ENCODE measurements at regions of chr7 and their contacts with region 1.

Region 1: DNA sequence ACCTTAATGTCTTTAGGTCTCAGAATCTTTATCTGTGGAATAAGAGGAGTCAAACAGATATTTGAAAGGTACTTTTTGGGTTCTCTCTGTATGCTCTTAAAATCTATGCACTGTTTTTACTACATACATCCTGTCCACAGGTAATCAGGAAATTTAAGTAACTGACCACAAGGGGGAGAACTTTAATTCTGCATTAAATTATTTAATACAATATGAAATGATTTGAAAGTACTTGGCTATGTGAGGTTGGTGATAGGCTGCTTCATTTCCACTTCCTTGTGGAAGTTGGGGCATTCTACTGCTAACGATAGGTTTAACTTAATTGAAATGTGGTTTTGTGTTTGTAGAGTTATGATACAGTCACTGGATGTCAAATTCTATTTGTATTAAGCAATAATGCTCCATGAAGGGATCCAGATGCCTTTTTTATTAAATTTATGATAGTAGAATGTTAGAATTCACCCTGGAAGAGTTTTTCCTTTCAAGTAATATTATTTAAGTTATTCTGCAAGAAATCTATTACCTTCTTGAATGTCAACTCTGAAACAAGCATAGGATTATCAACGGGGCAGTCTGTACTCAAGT is 6.0 kb downstream of the TEX47 start:
- DNase-seq: peak; percentile 37
- H3K4me3 ChIP-seq: no peak overlapping the region
- H3K27ac ChIP-seq: no peak overlapping the region
- H3K4me1 ChIP-seq: no peaks in the 10 kb centered on the region
- H3K27me3 ChIP-seq: peaks cover 2% of the 10 kb centered on the region
- CTCF ChIP-seq: peak; percentile 68

Region 2: DNA sequence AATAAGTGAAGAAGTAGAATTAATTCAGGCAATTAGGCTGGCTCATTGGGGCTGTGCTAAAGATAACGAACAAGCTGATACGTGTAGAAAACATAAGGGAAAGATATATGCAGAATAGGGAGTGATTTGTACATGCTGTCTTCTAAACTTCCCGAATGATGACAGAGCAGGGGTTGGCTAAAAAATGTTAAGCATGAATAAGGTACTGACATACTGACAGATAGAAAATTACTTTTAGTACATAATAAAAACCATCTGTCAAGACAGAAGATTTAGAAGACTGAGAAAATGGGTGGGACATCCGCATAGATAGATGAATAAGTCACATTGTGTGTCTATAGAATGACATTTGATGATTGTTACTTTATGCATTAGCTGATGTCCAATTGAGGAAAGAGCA is 188.9 kb before region 1 on chr7:
- CTCF ChIA-PET with region 1: no interaction called
- POLR2A ChIA-PET with region 1: no interaction called
- intact Hi-C with region 1: no loop called
- DNase-seq: no peak
- H3K4me3 ChIP-seq: no peak overlapping the region
- H3K27ac ChIP-seq: no peak overlapping the region
- H3K4me1 ChIP-seq: no peaks in the 10 kb centered on the region
- H3K27me3 ChIP-seq: peaks cover 10% of the 10 kb centered on the region
- CTCF ChIP-seq: no peak

Region 3: GRCh38 chr7:89622838-89623672 is 833.5 kb after region 1 on chr7:
- CTCF ChIA-PET with region 1: no interaction called
- POLR2A ChIA-PET with region 1: no interaction called
- intact Hi-C with region 1: loop called (anchors 10 kb)
- DNase-seq: peak; percentile 58
- H3K4me3 ChIP-seq: no peak overlapping the region
- H3K27ac ChIP-seq: no peak overlapping the region
- H3K4me1 ChIP-seq: no peaks in the 10 kb centered on the region
- H3K27me3 ChIP-seq: peaks cover 10% of the 10 kb centered on the region
- CTCF ChIP-seq: peak; percentile 81

Region 4: DNA sequence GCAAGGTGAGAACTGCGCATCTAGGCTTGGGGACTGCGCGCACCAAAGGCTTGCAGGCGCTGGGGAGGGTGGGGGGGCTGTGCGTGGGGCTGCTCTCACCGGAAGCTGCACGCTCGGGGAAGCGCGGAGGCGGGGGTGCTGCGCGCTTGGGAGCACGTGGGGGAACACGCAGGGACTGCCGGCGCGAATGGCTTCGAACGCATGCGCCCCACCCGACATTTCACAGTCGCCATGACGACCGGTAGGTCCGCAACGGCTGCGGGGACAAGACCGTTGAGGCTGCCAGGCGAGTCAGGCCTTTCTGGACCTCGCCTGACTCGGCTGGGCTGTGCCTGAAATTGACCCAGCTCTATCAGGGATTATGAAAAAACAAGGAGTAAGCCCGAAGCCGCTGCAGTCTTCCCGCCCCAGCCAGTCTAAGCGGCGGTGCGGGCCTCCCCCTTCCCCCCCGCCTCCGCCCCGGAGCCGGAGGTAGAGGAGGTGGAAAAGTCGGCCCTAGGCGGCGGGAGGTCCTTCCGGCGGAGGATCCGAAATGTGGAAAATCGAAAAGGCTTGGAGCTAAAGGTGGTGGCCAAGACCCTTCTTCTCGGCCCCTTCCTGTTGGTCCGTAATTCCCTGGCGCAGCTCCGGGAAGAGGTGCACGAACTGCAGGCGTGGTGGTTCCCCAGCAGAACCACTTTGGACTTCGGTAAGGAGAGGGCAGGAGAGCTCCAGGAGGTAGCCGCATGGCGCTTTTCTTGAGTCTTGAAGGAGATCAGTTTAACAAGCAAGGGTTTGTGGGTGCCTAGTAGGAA is 1329.8 kb after region 1 on chr7:
- CTCF ChIA-PET with region 1: no interaction called
- POLR2A ChIA-PET with region 1: no interaction called
- intact Hi-C with region 1: loop called (anchors 10 kb)
- DNase-seq: peak; percentile 63
- H3K4me3 ChIP-seq: peak overlapping the region; percentile 51
- H3K27ac ChIP-seq: no peak overlapping the region
- H3K4me1 ChIP-seq: no peaks in the 10 kb centered on the region
- H3K27me3 ChIP-seq: peaks cover 17% of the 10 kb centered on the region
- CTCF ChIP-seq: no peak